WTC11 (cell line): ENCODE measurements at regions of chr10 and their contacts with region 1.

Region 1: DNA sequence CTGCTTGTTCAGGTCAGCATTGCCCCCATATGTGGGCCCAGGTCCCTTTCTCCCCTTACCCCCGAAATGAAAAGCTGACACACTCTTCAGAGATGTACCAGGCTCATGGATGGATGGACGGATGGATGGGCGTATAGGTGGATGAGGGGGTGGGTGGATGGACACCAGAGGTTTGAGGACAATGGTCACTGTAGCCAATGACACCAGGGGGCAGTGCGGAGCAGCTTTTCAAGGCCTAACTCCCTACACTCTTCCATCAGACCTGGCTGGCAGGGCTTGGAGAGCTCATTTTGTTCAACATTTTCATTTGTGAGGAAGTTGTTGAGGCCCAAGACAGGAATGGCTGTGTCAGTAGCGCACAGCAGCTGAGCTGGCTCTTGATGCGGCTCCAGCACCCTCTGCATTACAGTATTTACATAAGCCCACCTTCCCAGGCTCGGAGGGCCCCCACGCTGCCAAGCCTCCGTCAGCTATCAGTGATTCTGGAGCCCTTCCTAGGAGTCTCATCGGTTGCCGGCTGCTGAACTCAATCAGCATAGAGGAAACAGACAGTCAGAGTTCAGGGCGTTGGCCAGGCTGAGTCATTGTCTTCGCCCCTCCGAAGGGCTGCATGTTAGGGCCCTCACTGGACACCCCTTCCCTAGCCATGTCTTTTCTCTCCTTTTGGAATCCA is 11.6 kb upstream of the FFAR4 start:
- DNase-seq: peak; percentile 85
- ATAC-seq: peak; percentile 95
- H3K4me3 Mint-ChIP-seq: 0 out of 2 replicates have a peak overlapping the region, but pooled peaks have one; percentile 0
- H3K27ac Mint-ChIP-seq: no peak overlapping the region
- H3K4me1 Mint-ChIP-seq: peaks cover 11% of the 10 kb centered on the region
- H3K27me3 Mint-ChIP-seq: no peaks in the 10 kb centered on the region
- CTCF ChIP-seq: peak; percentile 71

Region 2: GRCh38 chr10:93541402-93542357 is 13.2 kb before region 1 on chr10:
- CTCF ChIA-PET with region 1: interaction called, 62 read pairs
- POLR2A ChIA-PET with region 1: no interaction called
- DNase-seq: peak; percentile 74
- ATAC-seq: peak; percentile 98
- H3K4me3 Mint-ChIP-seq: peak overlapping the region; percentile 39
- H3K27ac Mint-ChIP-seq: no peak overlapping the region
- H3K4me1 Mint-ChIP-seq: 0 out of 2 replicates have a peak, but pooled peaks cover 2% of the 10 kb centered on the region
- H3K27me3 Mint-ChIP-seq: peaks cover 38% of the 10 kb centered on the region
- CTCF ChIP-seq: peak; percentile 88

Region 3: GRCh38 chr10:93591065-93591808 is 36.3 kb after region 1 on chr10:
- CTCF ChIA-PET with region 1: interaction called, 21 read pairs
- POLR2A ChIA-PET with region 1: no interaction called
- DNase-seq: no peak
- ATAC-seq: peak; percentile 87
- H3K4me3 Mint-ChIP-seq: no peak overlapping the region
- H3K27ac Mint-ChIP-seq: no peak overlapping the region
- H3K4me1 Mint-ChIP-seq: peaks cover 19% of the 10 kb centered on the region
- H3K27me3 Mint-ChIP-seq: peaks cover 6% of the 10 kb centered on the region
- CTCF ChIP-seq: no peak

Region 4: GRCh38 chr10:93680412-93681047 is 125.6 kb after region 1 on chr10:
- CTCF ChIA-PET with region 1: interaction called, 71 read pairs
- POLR2A ChIA-PET with region 1: no interaction called
- DNase-seq: no peak
- ATAC-seq: no peak
- H3K4me3 Mint-ChIP-seq: no peak overlapping the region
- H3K27ac Mint-ChIP-seq: no peak overlapping the region
- H3K4me1 Mint-ChIP-seq: peaks cover 7% of the 10 kb centered on the region
- H3K27me3 Mint-ChIP-seq: no peaks in the 10 kb centered on the region
- CTCF ChIP-seq: no peak

Region 5: DNA sequence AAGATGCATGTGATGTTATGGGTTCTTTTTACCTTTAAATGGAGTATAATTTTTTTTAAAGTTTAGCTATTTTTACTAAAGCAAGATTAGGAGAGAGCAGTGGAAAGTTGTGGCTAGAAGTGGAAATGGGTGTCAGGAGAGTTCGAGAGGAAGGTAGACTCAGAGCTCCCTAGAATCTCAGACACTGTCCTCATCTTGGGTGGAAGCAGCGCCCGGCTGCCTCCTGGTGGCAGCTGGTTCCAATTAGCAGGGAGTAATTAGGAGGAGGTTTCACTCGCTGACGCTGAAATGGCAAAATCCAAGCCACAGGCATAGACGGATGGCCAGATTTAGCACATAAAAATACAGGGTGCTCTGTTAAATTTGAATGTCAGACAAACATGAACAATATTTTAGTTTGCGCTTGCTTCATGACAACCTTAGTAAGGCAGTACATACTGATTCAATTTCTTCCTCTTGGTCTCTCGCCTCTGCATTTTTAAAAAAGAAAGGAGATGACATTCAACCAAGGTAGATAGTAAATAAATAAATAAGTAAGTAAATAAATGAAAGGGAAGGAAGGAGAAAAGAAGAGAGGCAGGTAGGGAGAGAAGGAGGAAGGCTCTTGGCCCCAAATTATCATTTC is 261.3 kb after region 1 on chr10:
- CTCF ChIA-PET with region 1: interaction called, 33 read pairs
- POLR2A ChIA-PET with region 1: no interaction called
- DNase-seq: peak; percentile 62
- ATAC-seq: peak; percentile 79
- H3K4me3 Mint-ChIP-seq: no peak overlapping the region
- H3K27ac Mint-ChIP-seq: no peak overlapping the region
- H3K4me1 Mint-ChIP-seq: peaks cover 15% of the 10 kb centered on the region
- H3K27me3 Mint-ChIP-seq: peaks cover 42% of the 10 kb centered on the region
- CTCF ChIP-seq: peak; percentile 45